ENCODE measurements at regions of chr17 and their contacts with region 1.

Region 1: DNA sequence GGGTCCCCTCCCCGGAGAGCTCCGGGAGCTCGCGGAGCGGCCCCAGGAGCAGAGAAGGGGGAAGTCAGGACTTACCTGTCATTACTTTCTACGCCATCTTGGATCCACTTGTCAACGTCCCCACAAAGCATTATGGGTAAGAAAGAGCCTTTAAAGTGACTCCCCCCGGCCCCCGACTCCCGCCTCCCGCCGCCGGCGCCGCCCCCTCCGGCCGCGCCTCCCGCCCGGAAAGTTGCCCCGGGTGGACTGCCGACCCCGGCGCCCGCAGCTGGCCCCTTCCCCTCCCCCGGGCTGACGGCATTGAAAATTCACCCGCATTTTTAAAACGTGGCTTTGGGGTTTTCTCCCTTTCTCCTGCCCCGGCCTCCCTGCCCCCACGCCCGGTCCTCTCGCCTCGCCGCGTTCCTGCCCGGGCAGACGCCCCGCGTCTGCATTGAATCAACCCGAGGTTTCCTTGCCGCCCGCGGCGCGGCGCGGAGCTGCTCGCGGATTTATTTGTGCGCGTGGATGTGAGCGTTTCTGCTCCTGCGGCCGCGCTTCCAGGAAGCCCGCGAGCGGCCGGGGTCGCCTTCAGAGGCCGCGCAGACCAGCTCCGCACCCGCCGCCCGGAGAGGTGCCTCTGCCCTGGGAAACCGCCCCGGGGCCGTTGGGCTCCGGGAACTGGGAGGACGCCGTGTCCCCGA is at the start of gene HELZ:
- DNase-seq: peak; percentile 44 to 90 (median 67)
- ATAC-seq: peak; percentile 67
- H3K4me3 ChIP-seq: peak within 1 kb of the TSS; percentile 78 to 84
- H3K4me3 Mint-ChIP-seq: peak within 1 kb of the TSS; percentile 90
- H3K27ac ChIP-seq: peak within 1 kb of the TSS; percentile 71 to 77
- H3K27ac Mint-ChIP-seq: peak within 1 kb of the TSS; percentile 89
- H3K4me1 ChIP-seq: peaks cover 35% of the 10 kb centered on the region
- H3K4me1 Mint-ChIP-seq: peaks cover 52% of the 10 kb centered on the region
- H3K27me3 ChIP-seq: peaks cover 0 to 2% of the 10 kb centered on the region in 2 experiments
- H3K27me3 Mint-ChIP-seq: no peaks in the 10 kb centered on the region
- CTCF ChIP-seq: no peak
- total RNA-seq, gene HELZ: 108 to 116 TPM

Region 2: DNA sequence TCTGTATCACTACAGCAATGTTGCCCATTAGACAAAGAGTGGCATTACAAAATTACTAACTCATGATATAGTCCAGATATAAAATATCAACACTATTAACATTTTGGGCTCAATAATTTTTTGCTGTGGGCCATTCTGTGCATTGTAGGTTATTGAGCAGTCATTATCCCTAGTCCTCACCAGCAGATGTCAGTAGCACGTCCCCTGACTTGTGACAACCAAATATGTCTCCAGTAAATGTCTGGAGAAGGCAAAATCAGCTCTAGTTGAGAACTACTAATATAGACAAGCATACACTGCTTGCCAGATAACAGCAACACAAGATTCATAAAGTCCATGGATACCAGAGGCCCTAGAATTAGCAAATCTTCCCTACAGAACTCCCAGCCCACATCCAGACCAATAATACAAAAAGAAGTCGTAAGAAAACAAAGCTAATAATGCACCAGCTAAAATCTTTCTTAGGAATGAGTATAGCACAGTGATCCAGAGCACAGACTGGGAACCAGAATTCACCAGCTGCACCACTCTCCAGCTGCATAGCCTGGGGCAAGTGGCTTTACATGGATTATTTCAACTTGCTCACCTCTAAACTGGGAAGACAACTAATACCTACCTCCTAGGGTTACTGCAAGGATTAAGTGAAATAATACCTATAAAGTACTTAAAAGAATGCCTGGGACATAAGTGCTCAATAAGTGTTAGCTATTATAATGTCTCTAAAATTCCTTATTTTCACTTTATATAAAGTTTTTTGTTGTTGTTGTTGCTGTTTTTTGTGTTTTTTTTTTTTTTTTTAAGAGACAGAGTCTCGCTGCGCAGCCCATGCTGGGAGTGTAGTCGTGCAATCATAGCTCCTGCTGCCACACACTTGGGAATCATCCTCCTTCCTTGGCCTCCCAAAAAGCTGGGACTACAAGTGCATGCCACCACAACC is 23.9 kb before region 1 on chr17:
- CTCF ChIA-PET with region 1: interaction called, 4 read pairs
- POLR2A ChIA-PET with region 1: interaction called, 6 read pairs
- intact Hi-C with region 1: loop called in 1 of 2 experiments (anchors 2 kb)
- DNase-seq: peak in 3 of 9 experiments; percentile 50 to 78 (median 71)
- ATAC-seq: peak; percentile 81
- H3K4me3 ChIP-seq: no peak overlapping the region
- H3K4me3 Mint-ChIP-seq: no peak overlapping the region
- H3K27ac ChIP-seq: no peak overlapping the region
- H3K27ac Mint-ChIP-seq: no peak overlapping the region
- H3K4me1 ChIP-seq: no peaks in the 10 kb centered on the region
- H3K4me1 Mint-ChIP-seq: peaks cover 51% of the 10 kb centered on the region
- H3K27me3 ChIP-seq: no peaks in the 10 kb centered on the region
- H3K27me3 Mint-ChIP-seq: no peaks in the 10 kb centered on the region
- CTCF ChIP-seq: peak; percentile 69

Region 3: GRCh38 chr17:67293251-67294203 is 48.3 kb after region 1 on chr17:
- CTCF ChIA-PET with region 1: interaction called, 3 read pairs
- POLR2A ChIA-PET with region 1: no interaction called
- intact Hi-C with region 1: loop called (anchors 1 kb)
- DNase-seq: peak; percentile 37 to 83 (median 69)
- ATAC-seq: peak; percentile 97
- H3K4me3 ChIP-seq: peak overlapping the region in 1 of 2 experiments; percentile 12
- H3K4me3 Mint-ChIP-seq: peak overlapping the region; percentile 57
- H3K27ac ChIP-seq: no peak overlapping the region
- H3K27ac Mint-ChIP-seq: no peak overlapping the region
- H3K4me1 ChIP-seq: no peaks in the 10 kb centered on the region
- H3K4me1 Mint-ChIP-seq: peaks cover 3% of the 10 kb centered on the region
- H3K27me3 ChIP-seq: no peaks in the 10 kb centered on the region
- H3K27me3 Mint-ChIP-seq: no peaks in the 10 kb centered on the region
- CTCF ChIP-seq: peak; percentile 74

Region 4: DNA sequence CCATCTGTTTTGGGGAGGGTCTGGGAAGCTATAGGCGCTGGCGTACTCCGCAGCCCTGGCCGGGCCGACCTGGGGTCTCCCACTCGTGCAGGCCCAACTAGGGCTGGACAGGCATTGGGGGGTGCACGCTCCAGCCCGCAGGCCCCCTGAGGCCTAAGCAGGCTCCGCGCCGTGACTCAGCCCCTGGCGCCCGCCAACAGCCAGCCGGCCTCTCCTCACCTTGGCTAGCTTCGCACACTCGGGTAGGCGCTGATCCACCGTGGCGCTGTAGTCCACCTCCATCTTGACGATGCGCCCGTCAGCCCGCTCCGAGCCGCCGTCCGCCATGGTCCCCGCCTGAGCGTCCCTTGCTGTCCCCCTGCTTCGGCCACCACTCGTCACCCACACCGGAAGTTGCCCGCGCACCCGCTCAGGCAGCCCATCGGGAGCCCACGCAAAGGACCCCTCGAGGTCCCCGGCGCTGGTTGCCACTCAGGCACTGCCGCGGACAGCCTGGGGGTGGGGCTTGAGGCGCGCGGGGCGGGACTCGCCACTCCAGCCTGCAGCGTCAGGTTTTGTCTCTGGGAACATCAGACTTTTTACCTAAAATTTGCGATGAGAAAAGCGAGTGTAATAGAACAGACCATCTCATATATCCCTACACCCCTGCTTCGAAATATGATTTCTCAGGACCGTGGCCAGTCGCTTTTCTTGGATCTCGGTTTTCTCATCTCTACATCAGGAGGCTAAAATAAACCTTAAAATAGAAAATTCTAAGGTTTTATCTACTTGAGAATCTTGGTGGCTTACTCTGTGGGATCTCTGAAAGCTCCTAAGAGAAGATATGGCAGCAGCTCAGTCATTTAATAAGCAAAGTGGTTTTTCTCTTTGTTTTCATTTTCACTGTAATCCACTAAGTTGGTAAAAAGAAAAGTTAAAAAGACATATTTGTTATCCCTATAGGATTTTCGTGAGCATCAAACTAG is 121.3 kb after region 1 on chr17 and contains the start of gene PSMD12:
- CTCF ChIA-PET with region 1: no interaction called
- POLR2A ChIA-PET with region 1: no interaction called
- intact Hi-C with region 1: loop called (anchors 5 to 10 kb)
- DNase-seq: peak; percentile 88 to 97 (median 93)
- ATAC-seq: peak; percentile 97
- H3K4me3 ChIP-seq: peak within 1 kb of the TSS; percentile 87 to 94
- H3K4me3 Mint-ChIP-seq: peak within 1 kb of the TSS; percentile 92
- H3K27ac ChIP-seq: peak within 1 kb of the TSS; percentile 86 to 95
- H3K27ac Mint-ChIP-seq: peak within 1 kb of the TSS; percentile 95
- H3K4me1 ChIP-seq: peaks cover 40% of the 10 kb centered on the region
- H3K4me1 Mint-ChIP-seq: peaks cover 43% of the 10 kb centered on the region
- H3K27me3 ChIP-seq: no peaks in the 10 kb centered on the region
- H3K27me3 Mint-ChIP-seq: no peaks in the 10 kb centered on the region
- CTCF ChIP-seq: no peak
- total RNA-seq, gene PSMD12: 52.1 to 54.9 TPM

Region 5: DNA sequence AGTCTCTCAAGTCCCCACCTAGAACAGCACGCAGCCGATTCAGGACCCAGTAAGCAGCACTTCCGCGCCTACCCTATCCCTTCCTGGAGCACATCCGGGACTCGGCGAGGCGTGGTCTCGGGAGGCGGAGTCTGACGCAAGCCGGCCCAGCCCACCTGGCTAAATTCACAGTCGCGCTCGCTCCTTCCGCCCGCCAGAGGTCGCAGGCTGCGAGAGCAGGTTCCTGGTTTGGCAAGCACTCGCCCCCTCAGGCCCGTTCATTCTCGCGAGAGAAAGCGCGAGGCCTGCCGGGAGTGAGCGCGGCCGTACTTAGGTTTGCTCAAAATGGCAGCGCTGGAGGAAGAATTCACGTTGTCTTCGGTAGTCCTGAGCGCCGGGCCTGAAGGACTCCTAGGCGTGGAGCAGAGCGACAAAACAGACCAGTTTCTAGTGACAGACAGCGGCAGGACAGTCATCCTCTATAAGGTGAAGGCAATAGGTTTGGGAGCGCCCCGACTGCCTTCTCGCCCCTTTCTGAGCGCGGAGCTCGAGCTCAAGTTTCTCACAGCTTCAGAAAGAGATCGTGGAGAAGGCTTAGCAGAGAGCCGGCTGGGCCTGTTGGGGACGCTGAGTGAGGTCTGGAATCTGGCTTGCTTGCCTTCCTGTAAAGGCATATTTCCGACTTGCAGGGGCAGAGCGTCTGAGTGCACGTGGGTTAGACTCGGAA is 472.6 kb after region 1 on chr17 and contains the start of gene NOL11:
- CTCF ChIA-PET with region 1: no interaction called
- POLR2A ChIA-PET with region 1: interaction called, 3 read pairs
- intact Hi-C with region 1: loop called in 1 of 2 experiments (anchors 5 kb)
- DNase-seq: peak; percentile 99 to 100 (median 99)
- ATAC-seq: peak; percentile 94
- H3K4me3 ChIP-seq: peak within 1 kb of the TSS; percentile 93 to 98
- H3K4me3 Mint-ChIP-seq: peak within 1 kb of the TSS; percentile 99
- H3K27ac ChIP-seq: peak within 1 kb of the TSS; percentile 90 to 96
- H3K27ac Mint-ChIP-seq: peak within 1 kb of the TSS; percentile 99
- H3K4me1 ChIP-seq: peaks cover 20% of the 10 kb centered on the region
- H3K4me1 Mint-ChIP-seq: peaks cover 32% of the 10 kb centered on the region
- H3K27me3 ChIP-seq: no peaks in the 10 kb centered on the region
- H3K27me3 Mint-ChIP-seq: peaks cover 5% of the 10 kb centered on the region
- CTCF ChIP-seq: peak; percentile 72
- total RNA-seq, gene NOL11: 91.0 to 94.0 TPM

Region 6: DNA sequence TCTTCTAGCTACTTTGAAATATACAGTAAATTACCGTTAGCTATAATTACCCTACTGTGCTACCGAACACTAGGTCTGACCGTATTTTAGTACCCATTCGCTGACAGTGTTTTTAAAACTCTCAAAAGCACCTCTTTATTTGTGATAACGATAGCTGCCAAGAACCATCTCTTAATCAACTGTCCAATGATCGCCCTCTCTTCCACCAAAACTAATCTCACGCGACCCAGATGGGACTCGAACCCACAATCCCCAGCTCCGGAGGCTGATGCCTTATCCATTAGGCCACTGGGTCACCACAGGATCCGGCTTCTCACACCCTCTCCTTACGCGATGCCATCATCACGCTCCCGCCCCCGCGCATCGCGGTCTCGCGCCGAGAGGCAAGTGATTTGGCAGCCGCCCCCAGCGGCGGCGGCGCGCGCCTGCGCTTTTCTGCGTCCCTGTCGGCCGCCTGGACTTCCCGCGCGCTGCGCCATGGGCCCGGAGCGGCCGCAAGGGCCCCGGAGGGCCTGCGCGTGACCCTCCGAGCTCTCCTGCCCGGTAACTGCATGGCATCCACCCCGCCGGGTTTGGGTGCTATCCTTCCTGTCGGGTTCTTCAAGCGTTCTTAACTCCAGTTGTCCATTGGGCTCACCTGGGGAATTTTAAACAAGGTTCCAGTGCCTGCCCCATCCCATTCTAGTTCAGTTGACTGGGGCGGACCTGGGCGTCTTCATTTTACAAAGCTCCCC is 774.6 kb after region 1 on chr17:
- CTCF ChIA-PET with region 1: no interaction called
- POLR2A ChIA-PET with region 1: no interaction called
- intact Hi-C with region 1: loop called in 1 of 2 experiments (anchors 10 kb)
- DNase-seq: peak; percentile 93 to 99 (median 96)
- ATAC-seq: peak; percentile 92
- H3K4me3 ChIP-seq: peak overlapping the region; percentile 64 to 71
- H3K4me3 Mint-ChIP-seq: peak overlapping the region; percentile 84
- H3K27ac ChIP-seq: peak overlapping the region; percentile 58 to 64
- H3K27ac Mint-ChIP-seq: peak overlapping the region; percentile 93
- H3K4me1 ChIP-seq: peaks cover 6% of the 10 kb centered on the region
- H3K4me1 Mint-ChIP-seq: peaks cover 23% of the 10 kb centered on the region
- H3K27me3 ChIP-seq: no peaks in the 10 kb centered on the region
- H3K27me3 Mint-ChIP-seq: no peaks in the 10 kb centered on the region
- CTCF ChIP-seq: peak; percentile 33